B cell (primary cell): ENCODE measurements at regions of chr4 and their contacts with region 1.

Region 1: GRCh38 chr4:121800961-121801714 is at the start of gene EXOSC9:
- DNase-seq: peak; percentile 97
- ATAC-seq: peak; percentile 76
- H3K4me3 ChIP-seq: peak within 1 kb of the TSS; percentile 64 to 99 (median 93)
- H3K4me3 Mint-ChIP-seq: peak within 1 kb of the TSS; percentile 96
- H3K27ac ChIP-seq: peak within 1 kb of the TSS; percentile 88 to 97
- H3K27ac Mint-ChIP-seq: peak within 1 kb of the TSS; percentile 98
- H3K4me1 ChIP-seq: peaks cover 8 to 15% of the 10 kb centered on the region in 2 donors
- H3K4me1 Mint-ChIP-seq: peaks cover 39% of the 10 kb centered on the region
- H3K27me3 ChIP-seq: no peaks in the 10 kb centered on the region
- H3K27me3 Mint-ChIP-seq: no peaks in the 10 kb centered on the region
- CTCF ChIP-seq: no peak
- total RNA-seq, gene EXOSC9: 35.5 and 42.1 TPM in 2 replicates

Region 2: DNA sequence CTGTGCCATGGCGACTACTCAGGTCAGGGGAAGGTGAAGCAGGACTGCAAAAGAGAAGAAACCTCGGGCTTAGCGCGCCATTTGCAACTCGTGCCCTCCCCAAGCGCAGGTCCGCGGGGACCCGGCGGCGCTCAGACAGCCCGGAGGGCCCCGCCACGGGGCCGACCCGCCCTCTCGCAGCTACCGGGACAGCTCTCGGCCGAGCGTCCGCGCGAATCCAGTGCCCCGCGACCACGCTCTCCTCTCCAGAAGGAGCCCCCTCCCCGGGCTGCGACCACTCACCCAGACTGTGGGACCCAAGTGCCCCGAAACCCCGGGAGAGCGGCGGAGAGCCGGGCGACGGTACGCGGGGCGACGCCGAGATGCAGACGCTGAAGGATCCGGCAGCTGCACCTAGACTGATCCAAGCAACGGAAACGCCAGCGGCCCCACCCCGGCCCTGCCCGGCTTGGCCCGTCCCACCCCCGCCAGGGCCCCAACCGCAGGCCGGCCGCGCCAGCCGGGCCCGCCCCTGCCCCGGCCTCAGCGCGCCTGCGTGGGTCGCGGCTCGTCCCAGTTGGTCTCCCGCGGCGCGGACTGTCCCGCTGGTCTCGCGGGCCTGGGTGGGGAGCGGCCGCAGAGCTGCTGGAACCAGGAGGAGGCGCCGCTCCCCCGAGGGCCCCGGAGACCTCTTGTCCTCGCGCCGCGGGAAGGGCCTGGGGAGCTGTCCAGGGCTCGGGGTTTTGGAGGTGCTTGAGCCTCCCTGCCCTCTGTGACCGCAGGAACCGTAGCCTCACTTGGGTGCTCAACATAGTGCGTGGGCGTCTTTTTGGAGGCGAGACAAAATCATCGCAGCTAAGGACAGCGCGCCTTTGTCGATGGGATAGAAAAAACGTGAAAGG is 104.3 kb before region 1 on chr4 and contains the start of gene ANXA5:
- CTCF ChIA-PET with region 1: no interaction called
- POLR2A ChIA-PET with region 1: no interaction called
- intact Hi-C with region 1: loop called (anchors 1 kb)
- DNase-seq: peak; percentile 78
- ATAC-seq: peak; percentile 90
- H3K4me3 ChIP-seq: peak within 1 kb of the TSS; percentile 73 to 85 (median 79)
- H3K4me3 Mint-ChIP-seq: peak within 1 kb of the TSS; percentile 99
- H3K27ac ChIP-seq: peak within 1 kb of the TSS; percentile 39 to 69
- H3K27ac Mint-ChIP-seq: peak within 1 kb of the TSS; percentile 98
- H3K4me1 ChIP-seq: peaks cover 13 to 14% of the 10 kb centered on the region in 2 donors
- H3K4me1 Mint-ChIP-seq: peaks cover 36% of the 10 kb centered on the region
- H3K27me3 ChIP-seq: peaks cover 0 to 12% (median 0%) of the 10 kb centered on the region in 4 experiments
- H3K27me3 Mint-ChIP-seq: peaks cover 12% of the 10 kb centered on the region
- CTCF ChIP-seq: no peak
- total RNA-seq, gene ANXA5: 66.5 and 67.8 TPM in 2 replicates

Region 3: GRCh38 chr4:121823505-121824170 is 22.5 kb after region 1 on chr4 and contains the start of gene CCNA2:
- CTCF ChIA-PET with region 1: no interaction called
- POLR2A ChIA-PET with region 1: interaction called, 7 read pairs
- intact Hi-C with region 1: loop called (anchors 1 kb)
- DNase-seq: peak; percentile 94
- ATAC-seq: peak; percentile 99
- H3K4me3 ChIP-seq: peak within 1 kb of the TSS; percentile 46 to 96 (median 74)
- H3K4me3 Mint-ChIP-seq: peak within 1 kb of the TSS; percentile 90
- H3K27ac ChIP-seq: peak within 1 kb of the TSS; percentile 62 to 82
- H3K27ac Mint-ChIP-seq: peak within 1 kb of the TSS; percentile 87
- H3K4me1 ChIP-seq: peaks cover 8 to 10% of the 10 kb centered on the region in 2 donors
- H3K4me1 Mint-ChIP-seq: peaks cover 16% of the 10 kb centered on the region
- H3K27me3 ChIP-seq: no peaks in the 10 kb centered on the region
- H3K27me3 Mint-ChIP-seq: no peaks in the 10 kb centered on the region
- CTCF ChIP-seq: no peak
- total RNA-seq, gene CCNA2: 0.94 and 1.8 TPM in 2 replicates

Region 4: GRCh38 chr4:122151982-122152710 is 351.0 kb after region 1 on chr4 and contains the start of gene BLTP1:
- CTCF ChIA-PET with region 1: no interaction called
- POLR2A ChIA-PET with region 1: no interaction called
- intact Hi-C with region 1: loop called (anchors 2 kb)
- DNase-seq: peak; percentile 91
- ATAC-seq: peak; percentile 96
- H3K4me3 ChIP-seq: peak within 1 kb of the TSS; percentile 73 to 89 (median 86)
- H3K4me3 Mint-ChIP-seq: peak within 1 kb of the TSS; percentile 92
- H3K27ac ChIP-seq: peak within 1 kb of the TSS; percentile 73 to 87
- H3K27ac Mint-ChIP-seq: peak within 1 kb of the TSS; percentile 91
- H3K4me1 ChIP-seq: peaks cover 20 to 25% of the 10 kb centered on the region in 2 donors
- H3K4me1 Mint-ChIP-seq: peaks cover 52% of the 10 kb centered on the region
- H3K27me3 ChIP-seq: no peaks in the 10 kb centered on the region
- H3K27me3 Mint-ChIP-seq: peaks cover 3% of the 10 kb centered on the region
- CTCF ChIP-seq: no peak
- total RNA-seq, gene BLTP1: 86.3 and 96.8 TPM in 2 replicates